Posterior vena cava (tissue), 2 donors: ENCODE measurements at regions of chr19 and their contacts with region 1.

Region 1: GRCh38 chr19:55795021-55795420 is 26.1 kb downstream of the RFPL4AL1 start:
- DNase-seq: no peak

Region 2: GRCh38 chr19:53809518-53810186 is 1985.4 kb before region 1 on chr19:
- intact Hi-C with region 1: loop called in 1 of 2 experiments (anchors 5 kb)
- DNase-seq: no peak